Left ventricle myocardium inferior (tissue), 1 donor: ENCODE measurements at regions of chr5 and their contacts with region 1.

Region 1: DNA sequence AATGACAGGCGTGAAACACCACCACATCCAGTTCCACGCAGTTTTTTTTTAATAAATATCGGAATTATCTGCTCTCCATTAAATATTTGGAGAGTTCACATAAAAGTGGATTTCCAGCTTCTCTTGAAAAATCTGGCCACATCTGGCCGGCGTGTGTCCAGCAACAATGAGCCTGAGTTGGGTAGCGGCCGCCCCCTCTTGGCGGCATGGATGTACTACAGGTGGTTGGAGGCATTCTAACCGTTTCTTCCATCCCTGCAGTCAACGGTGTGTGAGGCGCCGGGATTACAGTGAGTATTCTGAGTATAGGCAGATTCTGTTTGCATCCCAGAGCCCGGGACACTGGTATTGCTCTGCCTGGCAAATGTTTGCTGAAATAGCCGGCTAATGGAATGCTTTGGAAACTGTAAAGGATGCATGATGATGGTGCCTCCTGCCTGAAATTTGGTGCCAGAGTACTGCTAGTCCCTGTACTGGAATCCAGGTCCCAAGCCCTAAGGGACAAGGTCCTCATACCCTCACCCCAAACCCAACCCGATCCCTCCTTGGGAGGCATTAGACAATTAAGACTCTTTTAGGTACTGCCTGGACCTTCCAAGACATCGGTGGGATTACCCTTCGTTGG is 13.6 kb upstream of the GM2A start:
- DNase-seq: peak; percentile 82
- H3K4me3 ChIP-seq: peak overlapping the region; percentile 46
- H3K27ac ChIP-seq: peak overlapping the region; percentile 85
- H3K4me1 ChIP-seq: peaks cover 38% of the 10 kb centered on the region
- H3K27me3 ChIP-seq: no peaks in the 10 kb centered on the region
- CTCF ChIP-seq: peak; percentile 97

Region 2: GRCh38 chr5:150609843-150610584 is 629.3 kb before region 1 on chr5:
- intact Hi-C with region 1: no loop called
- DNase-seq: peak; percentile 65
- H3K4me3 ChIP-seq: peak overlapping the region; percentile 26
- H3K27ac ChIP-seq: peak overlapping the region; percentile 99
- H3K4me1 ChIP-seq: peaks cover 83% of the 10 kb centered on the region
- H3K27me3 ChIP-seq: no peaks in the 10 kb centered on the region
- CTCF ChIP-seq: no peak

Region 3: DNA sequence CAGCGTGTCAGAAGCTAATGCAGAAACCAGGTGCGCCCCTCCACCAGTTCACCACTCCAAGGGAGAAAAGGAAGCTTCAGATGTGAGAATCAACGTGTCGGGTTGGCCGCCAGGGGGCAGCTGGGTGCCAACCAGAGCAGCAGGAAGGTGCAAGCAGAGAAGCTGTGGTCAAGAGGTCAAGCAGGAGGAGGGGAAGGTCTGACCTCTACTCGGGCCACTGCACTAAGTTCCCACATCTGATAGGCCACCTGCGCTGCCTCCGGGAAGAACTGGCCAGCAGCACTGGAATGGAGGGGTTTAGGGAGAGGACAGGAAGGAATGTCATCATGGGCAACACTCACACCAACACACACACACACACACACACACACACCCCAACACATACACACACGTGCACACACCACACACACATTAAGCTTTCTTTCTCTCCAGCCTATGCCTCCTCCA is 113.1 kb before region 1 on chr5:
- intact Hi-C with region 1: loop called (anchors 10 kb)
- DNase-seq: peak; percentile 72
- H3K4me3 ChIP-seq: no peak overlapping the region
- H3K27ac ChIP-seq: peak overlapping the region; percentile 19
- H3K4me1 ChIP-seq: peaks cover 46% of the 10 kb centered on the region
- H3K27me3 ChIP-seq: no peaks in the 10 kb centered on the region
- CTCF ChIP-seq: peak; percentile 82

Region 4: DNA sequence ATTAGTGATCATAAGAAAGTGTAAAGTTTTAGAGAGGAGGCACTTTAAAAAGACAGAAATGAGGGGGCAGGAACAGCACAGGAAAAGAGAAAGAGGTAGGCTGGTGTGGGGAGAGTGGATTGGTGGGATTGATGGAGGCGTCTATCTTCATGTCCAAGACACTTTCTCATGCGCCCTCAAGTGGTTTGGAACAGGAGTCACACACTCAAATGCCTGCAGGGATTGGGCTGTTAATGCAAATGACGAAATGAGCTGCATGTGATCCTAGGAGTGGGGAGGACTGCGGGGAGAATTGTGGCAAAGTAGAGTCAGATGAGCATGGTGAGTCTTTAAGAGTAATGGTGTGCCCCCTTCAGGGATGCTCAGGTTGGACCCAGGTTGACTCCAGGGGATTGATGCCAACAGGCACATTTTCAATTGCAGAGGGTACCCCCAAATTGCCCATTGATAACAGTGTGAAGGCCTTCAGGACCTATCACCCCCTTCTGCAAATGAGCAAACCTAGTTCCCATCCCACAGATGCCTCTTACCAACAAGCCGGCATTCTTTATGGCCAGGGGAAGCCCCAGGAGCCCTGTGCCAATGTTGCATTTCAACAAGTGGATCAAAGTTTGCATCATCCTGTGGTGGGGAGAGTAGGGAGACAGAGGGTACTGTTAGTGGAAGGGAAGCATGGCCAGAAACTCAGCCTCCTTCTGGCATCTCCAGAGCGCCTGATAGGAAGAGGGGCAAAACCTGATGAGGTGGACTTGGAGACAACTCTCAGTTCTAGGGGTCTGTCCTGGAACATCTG is 58.9 kb after region 1 on chr5:
- intact Hi-C with region 1: no loop called
- DNase-seq: no peak
- H3K4me3 ChIP-seq: no peak overlapping the region
- H3K27ac ChIP-seq: no peak overlapping the region
- H3K4me1 ChIP-seq: no peaks in the 10 kb centered on the region
- H3K27me3 ChIP-seq: peaks cover 62% of the 10 kb centered on the region
- CTCF ChIP-seq: no peak

Region 5: DNA sequence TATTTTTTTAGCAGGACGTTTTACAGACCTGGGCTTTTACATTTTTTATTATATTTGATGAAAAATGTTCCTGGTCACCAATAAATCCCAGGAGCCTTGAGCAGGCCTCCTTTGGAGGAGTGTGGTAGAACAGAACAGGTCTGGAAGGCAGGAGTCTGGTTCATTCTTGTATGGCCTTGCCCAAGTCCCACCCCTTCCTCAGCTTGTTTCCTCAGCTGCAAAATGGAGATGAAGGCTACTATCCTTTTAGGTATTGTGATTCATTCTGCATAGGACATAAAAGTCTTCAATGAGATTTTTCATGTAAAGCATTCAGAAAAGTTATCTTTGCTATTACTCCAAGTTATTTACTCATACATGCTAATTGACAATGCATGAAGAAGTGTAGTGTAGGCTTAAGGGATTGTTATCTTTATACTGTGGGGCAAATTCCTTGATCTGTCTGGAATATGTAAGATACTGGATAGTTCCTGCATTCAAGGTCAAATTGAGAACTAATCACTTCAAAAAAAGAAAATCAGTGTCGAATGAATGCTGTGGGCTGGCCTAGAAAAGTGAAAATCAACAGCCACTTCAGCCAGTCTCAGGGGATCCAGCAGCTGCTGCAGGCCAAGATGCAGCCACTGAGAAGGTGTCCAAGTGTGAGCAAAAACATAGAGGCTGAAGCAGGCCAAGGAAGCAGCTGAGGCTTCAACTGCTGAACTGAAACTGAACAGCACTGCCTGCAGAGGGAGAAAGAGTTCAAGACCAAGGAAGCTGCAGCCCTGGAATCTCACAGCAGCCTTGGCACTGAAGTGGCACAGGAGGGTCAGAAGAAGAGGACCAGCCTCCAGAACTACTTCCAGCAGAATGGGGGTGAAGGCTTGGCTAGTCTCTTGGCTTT is 79.7 kb after region 1 on chr5:
- intact Hi-C with region 1: no loop called
- DNase-seq: peak; percentile 31
- H3K4me3 ChIP-seq: no peak overlapping the region
- H3K27ac ChIP-seq: no peak overlapping the region
- H3K4me1 ChIP-seq: peaks cover 9% of the 10 kb centered on the region
- H3K27me3 ChIP-seq: peaks cover 2% of the 10 kb centered on the region
- CTCF ChIP-seq: peak; percentile 31

Region 6: GRCh38 chr5:151384106-151384505 is 144.8 kb after region 1 on chr5:
- intact Hi-C with region 1: no loop called
- DNase-seq: no peak
- H3K4me3 ChIP-seq: no peak overlapping the region
- H3K27ac ChIP-seq: no peak overlapping the region
- H3K4me1 ChIP-seq: peaks cover 6% of the 10 kb centered on the region
- H3K27me3 ChIP-seq: peaks cover 22% of the 10 kb centered on the region
- CTCF ChIP-seq: no peak